ENCODE measurements at regions of chr15 and their contacts with region 1.

Region 1: DNA sequence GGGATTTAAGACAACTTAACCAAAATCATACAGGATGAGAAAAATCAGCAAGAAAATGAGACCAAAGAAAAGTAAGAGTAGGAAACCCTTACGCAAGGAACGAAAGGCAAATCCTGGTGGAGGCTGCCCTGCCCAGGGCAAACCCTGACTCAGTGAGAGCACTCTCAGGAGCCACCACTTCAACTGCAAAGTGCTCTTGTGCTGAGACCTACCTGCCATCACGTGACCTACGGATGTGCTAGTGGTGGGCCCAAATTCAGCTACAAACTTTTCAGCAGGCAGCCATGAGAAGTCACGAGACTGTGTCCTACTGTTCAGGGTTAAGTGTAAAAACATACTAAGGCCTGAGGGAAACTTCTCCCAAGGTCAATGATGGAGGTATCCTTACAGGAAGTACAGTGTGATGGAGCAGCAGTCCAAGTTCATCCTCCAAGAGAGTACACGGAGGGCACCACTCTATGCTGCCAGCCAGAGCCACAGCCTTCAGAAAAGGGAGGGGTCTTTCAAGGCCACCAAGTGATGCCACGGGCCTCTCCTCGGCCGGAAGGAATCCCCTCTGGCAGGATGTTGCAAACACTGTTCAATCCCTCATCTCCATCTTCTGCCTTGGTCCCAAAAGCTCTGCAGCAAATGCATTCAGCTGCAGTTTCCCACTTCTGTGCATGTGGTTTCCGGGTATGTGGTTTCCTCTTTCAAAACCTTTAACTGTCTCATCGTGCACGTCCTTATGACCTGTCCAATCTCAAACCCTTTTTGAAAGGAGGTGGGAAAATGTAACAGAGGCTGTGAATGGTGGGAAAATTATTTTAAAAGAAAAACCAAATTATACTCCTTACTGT is 9.5 kb downstream of the CHSY1 start:
- DNase-seq: peak in 2 of 5 donors; percentile 37 to 66
- ATAC-seq: peak; percentile 19 to 67 (median 50)
- H3K4me3 ChIP-seq: peak overlapping the region in 3 of 12 donors; percentile 1 to 40 (median 13)
- H3K27ac ChIP-seq: peak overlapping the region in 10 of 12 donors; percentile 5 to 70 (median 26)
- H3K4me1 ChIP-seq: peaks cover 0 to 100% (median 66%) of the 10 kb centered on the region in 12 donors
- H3K27me3 ChIP-seq: no peaks in the 10 kb centered on the region
- CTCF ChIP-seq: no peak
- POLR2A ChIP-seq: no peak

Region 2: DNA sequence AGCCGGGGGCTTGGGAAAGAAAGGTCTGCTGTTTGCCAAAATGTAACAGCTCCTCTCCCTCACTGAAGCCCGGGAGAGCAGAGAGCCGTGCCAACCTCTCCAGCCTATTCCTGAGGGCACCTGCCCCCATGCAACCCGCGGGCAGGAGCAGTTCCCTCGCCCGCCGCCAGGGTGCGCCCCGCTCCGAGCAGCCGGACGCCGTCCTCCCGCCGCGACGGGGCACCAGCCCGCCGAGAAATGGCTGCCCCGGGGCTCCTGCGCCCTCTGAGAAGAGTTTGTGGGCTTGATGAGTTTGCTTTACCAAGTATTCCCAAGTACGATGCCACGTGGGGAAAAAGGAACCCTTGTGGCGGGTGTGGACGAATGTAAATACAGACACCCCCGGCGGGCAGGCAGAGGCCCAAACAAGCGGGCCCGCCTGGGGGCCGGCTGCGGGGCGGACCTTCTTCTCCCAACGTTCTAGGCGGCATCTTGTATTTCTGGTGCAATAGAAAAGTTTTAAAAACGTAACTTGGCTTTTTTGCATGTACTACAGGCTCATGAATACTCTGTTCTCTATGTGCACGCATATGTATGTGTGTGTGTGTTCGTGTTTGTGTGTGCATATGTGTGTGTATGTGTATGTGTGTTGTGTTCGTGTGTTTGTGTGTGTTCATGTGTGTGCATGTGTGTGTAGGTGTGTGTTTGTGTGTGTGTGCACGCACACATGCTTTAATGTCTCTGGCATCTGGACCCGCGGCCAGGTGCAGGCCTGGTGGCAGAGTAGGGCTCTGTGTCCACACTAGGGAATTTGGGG is 153.4 kb before region 1 on chr15:
- intact Hi-C with region 1: no loop called
- DNase-seq: peak; percentile 67 to 90 (median 77)
- ATAC-seq: peak in 3 of 4 donors; percentile 62 to 82 (median 78)
- H3K4me3 ChIP-seq: peak overlapping the region in 5 of 12 donors; percentile 0 to 33 (median 20)
- H3K27ac ChIP-seq: peak overlapping the region in 3 of 12 donors; percentile 52 to 83 (median 55)
- H3K4me1 ChIP-seq: peaks cover 0 to 39% (median 31%) of the 10 kb centered on the region in 12 donors
- H3K27me3 ChIP-seq: no peaks in the 10 kb centered on the region
- CTCF ChIP-seq: peak; percentile 98 to 100 (median 99)
- POLR2A ChIP-seq: no peak

Region 3: GRCh38 chr15:101167753-101168463 is 74.5 kb before region 1 on chr15:
- intact Hi-C with region 1: loop called in 1 of 10 experiments (anchors 5 kb)
- DNase-seq: peak; percentile 77 to 88 (median 83)
- ATAC-seq: peak; percentile 75 to 84 (median 81)
- H3K4me3 ChIP-seq: peak overlapping the region in 6 of 12 donors; percentile 6 to 31 (median 15)
- H3K27ac ChIP-seq: peak overlapping the region; percentile 79 to 99 (median 85)
- H3K4me1 ChIP-seq: peaks cover 0 to 70% (median 23%) of the 10 kb centered on the region in 12 donors
- H3K27me3 ChIP-seq: no peaks in the 10 kb centered on the region
- CTCF ChIP-seq: peak in 1 of 12 donors; percentile 14
- POLR2A ChIP-seq: no peak

Region 4: GRCh38 chr15:101179341-101180153 is 62.8 kb before region 1 on chr15:
- intact Hi-C with region 1: loop called in 3 of 10 experiments (anchors 5 to 10 kb)
- DNase-seq: no peak
- ATAC-seq: no peak
- H3K4me3 ChIP-seq: no peak overlapping the region
- H3K27ac ChIP-seq: peak overlapping the region in 2 of 12 donors; percentile 7 to 31
- H3K4me1 ChIP-seq: peaks cover 0 to 78% (median 36%) of the 10 kb centered on the region in 12 donors
- H3K27me3 ChIP-seq: no peaks in the 10 kb centered on the region
- CTCF ChIP-seq: no peak
- POLR2A ChIP-seq: no peak

Region 5: DNA sequence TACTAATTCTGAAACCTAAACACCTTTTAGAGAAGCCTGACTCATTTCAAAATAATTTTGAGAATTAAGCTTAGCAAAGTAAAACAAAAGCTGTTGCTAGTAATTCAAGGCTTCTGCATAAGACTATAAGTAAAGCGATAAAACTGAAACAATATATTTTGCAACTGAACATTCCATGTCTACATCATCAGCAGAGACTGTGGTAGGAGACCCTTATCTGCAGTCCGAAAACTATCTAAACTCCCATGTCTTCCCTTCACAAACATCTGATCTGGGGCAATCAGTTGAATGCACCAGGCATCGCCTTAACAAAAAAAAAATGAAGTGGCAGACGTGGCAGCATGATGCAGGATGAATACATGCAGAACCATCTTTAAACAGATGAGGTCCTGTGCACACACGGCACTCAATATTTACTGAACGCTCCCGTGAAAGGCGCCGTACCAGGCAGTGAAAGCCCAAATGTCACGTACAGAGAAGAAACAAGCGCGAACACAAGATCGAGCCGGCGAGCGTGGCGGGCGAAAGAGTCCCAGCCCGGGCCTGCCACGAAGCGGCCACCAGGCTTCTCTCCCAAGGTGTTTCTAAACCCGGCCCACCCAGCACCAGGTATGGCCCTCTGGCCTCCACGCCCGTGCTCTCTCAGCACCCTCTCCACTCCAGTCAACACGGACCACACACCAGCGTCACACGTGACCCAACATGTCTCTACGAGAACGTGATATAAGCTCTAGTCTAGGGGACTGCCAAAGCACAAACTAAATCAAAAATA is 53.6 kb before region 1 on chr15:
- intact Hi-C with region 1: loop called in 7 of 10 experiments (anchors 5 to 10 kb)
- DNase-seq: peak in 1 of 5 donors; percentile 42
- ATAC-seq: peak in 3 of 4 donors; percentile 14 to 36 (median 30)
- H3K4me3 ChIP-seq: peak overlapping the region in 10 of 12 donors; percentile 4 to 56 (median 43)
- H3K27ac ChIP-seq: peak overlapping the region; percentile 63 to 93 (median 82)
- H3K4me1 ChIP-seq: peaks cover 0 to 96% (median 50%) of the 10 kb centered on the region in 12 donors
- H3K27me3 ChIP-seq: no peaks in the 10 kb centered on the region
- CTCF ChIP-seq: no peak
- POLR2A ChIP-seq: no peak

Region 6: GRCh38 chr15:101201406-101202174 is 40.8 kb before region 1 on chr15:
- intact Hi-C with region 1: loop called in 3 of 10 experiments (anchors 5 to 10 kb)
- DNase-seq: peak; percentile 84 to 93 (median 91)
- ATAC-seq: peak; percentile 89 to 96 (median 94)
- H3K4me3 ChIP-seq: no peak overlapping the region
- H3K27ac ChIP-seq: peak overlapping the region in 9 of 12 donors; percentile 37 to 85 (median 58)
- H3K4me1 ChIP-seq: peaks cover 3 to 86% (median 57%) of the 10 kb centered on the region in 12 donors
- H3K27me3 ChIP-seq: no peaks in the 10 kb centered on the region
- CTCF ChIP-seq: no peak
- POLR2A ChIP-seq: peak in 1 of 2 donors; percentile 49

Measured in heart left ventricle (tissue), 16 donors.